Naive thymus-derived CD4-positive, alpha-beta T cell (primary cell): ENCODE measurements at regions of chr5 and their contacts with region 1.

Region 1: DNA sequence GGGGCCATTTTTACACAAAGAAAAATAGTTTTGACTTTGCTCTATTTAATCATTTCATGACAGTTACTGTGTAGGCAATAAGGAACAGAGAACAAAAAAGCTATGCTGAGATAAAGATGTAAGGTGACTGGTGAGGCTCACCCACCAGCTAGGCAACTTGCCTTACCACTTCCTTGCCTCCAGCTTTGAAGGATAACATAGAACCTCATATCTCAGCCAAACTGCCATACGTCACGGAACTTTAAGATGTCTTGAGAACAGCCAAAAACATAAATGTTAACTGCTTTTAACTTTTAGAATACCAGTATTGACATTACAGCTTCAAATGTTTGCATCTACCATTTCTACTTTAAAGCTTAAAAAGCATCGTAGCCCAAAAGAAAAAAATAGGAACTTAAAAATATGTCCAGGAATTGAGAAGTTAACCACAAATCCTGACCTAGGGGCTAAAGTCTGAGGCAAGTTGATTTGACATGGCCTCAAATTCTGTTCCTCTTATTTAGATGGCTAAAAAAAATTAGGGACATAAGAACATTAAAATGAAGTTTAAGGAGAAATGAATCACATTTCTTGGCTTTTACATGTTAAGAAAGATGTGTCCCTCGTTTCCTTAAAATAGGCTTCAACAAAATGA is 7.7 kb upstream of the GCNT4 start:
- DNase-seq: peak in 7 of 9 donors; percentile 79 to 96 (median 92)
- ATAC-seq: peak; percentile 96
- H3K4me3 ChIP-seq: no peak overlapping the region
- H3K4me3 Mint-ChIP-seq: peak overlapping the region in 9 of 10 donors; percentile 68 to 85 (median 75)
- H3K27ac ChIP-seq: peak overlapping the region; percentile 77
- H3K27ac Mint-ChIP-seq: peak overlapping the region; percentile 70 to 99 (median 98)
- H3K4me1 ChIP-seq: peaks cover 32 to 81% of the 10 kb centered on the region in 2 donors
- H3K4me1 Mint-ChIP-seq: peaks cover 25 to 96% (median 83%) of the 10 kb centered on the region in 7 donors
- H3K27me3 ChIP-seq: no peaks in the 10 kb centered on the region
- H3K27me3 Mint-ChIP-seq: peaks cover 0 to 5% (median 0%) of the 10 kb centered on the region in 5 donors

Region 2: GRCh38 chr5:74272024-74272775 is 787.8 kb before region 1 on chr5:
- CTCF ChIA-PET with region 1: no interaction called
- POLR2A ChIA-PET with region 1: no interaction called
- intact Hi-C with region 1: no loop called
- DNase-seq: no peak
- ATAC-seq: no peak
- H3K4me3 ChIP-seq: no peak overlapping the region
- H3K4me3 Mint-ChIP-seq: no peak overlapping the region
- H3K27ac ChIP-seq: no peak overlapping the region
- H3K27ac Mint-ChIP-seq: no peak overlapping the region
- H3K4me1 ChIP-seq: no peaks in the 10 kb centered on the region
- H3K4me1 Mint-ChIP-seq: no peaks in the 10 kb centered on the region
- H3K27me3 ChIP-seq: no peaks in the 10 kb centered on the region
- H3K27me3 Mint-ChIP-seq: peaks cover 0 to 17% (median 14%) of the 10 kb centered on the region in 5 donors

Region 3: GRCh38 chr5:75078027-75078426 is 18.0 kb after region 1 on chr5:
- CTCF ChIA-PET with region 1: interaction called, 3 read pairs
- POLR2A ChIA-PET with region 1: interaction called, 11 read pairs
- intact Hi-C with region 1: loop called in 1 of 2 experiments (anchors 1 kb)
- DNase-seq: peak in 6 of 9 donors; percentile 39 to 78 (median 60)
- ATAC-seq: peak; percentile 87
- H3K4me3 ChIP-seq: no peak overlapping the region
- H3K4me3 Mint-ChIP-seq: peak overlapping the region in 7 of 10 donors; percentile 9 to 52 (median 29)
- H3K27ac ChIP-seq: no peak overlapping the region
- H3K27ac Mint-ChIP-seq: peak overlapping the region in 3 of 9 donors; percentile 67 to 78 (median 76)
- H3K4me1 ChIP-seq: peaks cover 3 to 12% of the 10 kb centered on the region in 2 donors
- H3K4me1 Mint-ChIP-seq: peaks cover 3 to 49% (median 34%) of the 10 kb centered on the region in 7 donors
- H3K27me3 ChIP-seq: no peaks in the 10 kb centered on the region
- H3K27me3 Mint-ChIP-seq: peaks cover 0 to 5% (median 0%) of the 10 kb centered on the region in 5 donors

Region 4: DNA sequence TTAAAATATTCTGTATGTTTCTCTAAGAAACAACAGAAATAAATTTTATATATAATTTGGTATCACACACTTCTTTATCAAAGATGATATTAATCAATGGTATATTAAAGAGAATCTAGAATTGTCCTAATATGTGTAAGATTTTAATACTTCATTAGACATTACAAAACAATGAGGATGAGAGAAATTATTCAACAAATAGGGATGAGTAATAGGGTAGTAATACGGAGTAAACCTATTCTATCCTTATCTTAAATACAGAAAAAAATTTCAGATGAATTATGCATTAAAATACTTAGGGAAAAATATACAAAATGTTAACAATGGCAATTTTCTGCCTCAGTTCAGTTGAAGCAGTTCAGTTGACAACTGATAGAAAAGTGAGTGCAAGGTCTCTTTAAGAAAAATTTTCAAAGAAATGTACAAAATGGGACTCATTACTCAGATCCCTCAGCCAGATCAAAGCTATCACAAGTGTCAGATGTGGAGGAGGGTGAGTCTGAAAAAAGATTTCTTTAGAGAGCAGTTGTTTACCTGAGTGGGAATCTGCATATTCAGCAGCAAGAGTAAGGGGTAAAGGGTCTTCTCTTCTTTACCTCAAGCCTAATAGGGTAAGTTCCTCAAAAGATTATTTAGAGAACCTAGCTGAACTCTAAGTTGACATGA is 49.0 kb after region 1 on chr5:
- CTCF ChIA-PET with region 1: interaction called, 3 read pairs
- POLR2A ChIA-PET with region 1: interaction called, 5 read pairs
- intact Hi-C with region 1: loop called in 1 of 2 experiments (anchors 2 kb)
- DNase-seq: peak in 6 of 9 donors; percentile 16 to 39 (median 26)
- ATAC-seq: peak; percentile 47
- H3K4me3 ChIP-seq: no peak overlapping the region
- H3K4me3 Mint-ChIP-seq: peak overlapping the region in 2 of 10 donors; percentile 1 to 7
- H3K27ac ChIP-seq: no peak overlapping the region
- H3K27ac Mint-ChIP-seq: peak overlapping the region in 8 of 9 donors; percentile 7 to 82 (median 67)
- H3K4me1 ChIP-seq: peaks cover 0 to 19% of the 10 kb centered on the region in 2 donors
- H3K4me1 Mint-ChIP-seq: peaks cover 0 to 49% (median 35%) of the 10 kb centered on the region in 7 donors
- H3K27me3 ChIP-seq: no peaks in the 10 kb centered on the region
- H3K27me3 Mint-ChIP-seq: peaks cover 0 to 3% (median 0%) of the 10 kb centered on the region in 5 donors

Region 5: DNA sequence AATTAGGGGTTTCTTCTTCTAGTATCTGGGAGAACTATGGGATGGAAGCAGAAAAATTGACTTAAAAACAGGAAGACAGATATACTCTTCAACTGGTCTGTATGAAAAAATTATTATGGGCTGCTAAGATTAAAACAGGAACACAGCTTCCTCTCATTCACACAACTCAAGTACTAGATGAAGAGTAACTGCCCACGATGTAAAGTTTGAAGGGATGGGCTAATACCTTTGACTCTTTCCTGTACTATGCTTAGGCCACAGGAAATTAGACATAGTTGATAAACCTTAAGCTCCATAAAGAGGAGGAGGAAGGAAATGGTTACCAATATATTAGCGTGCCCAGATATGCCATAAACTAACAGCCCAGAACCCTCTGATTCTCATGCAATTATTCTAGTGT is 88.0 kb after region 1 on chr5:
- CTCF ChIA-PET with region 1: no interaction called
- POLR2A ChIA-PET with region 1: interaction called, 11 read pairs
- intact Hi-C with region 1: no loop called
- DNase-seq: no peak
- ATAC-seq: no peak
- H3K4me3 ChIP-seq: no peak overlapping the region
- H3K4me3 Mint-ChIP-seq: no peak overlapping the region
- H3K27ac ChIP-seq: no peak overlapping the region
- H3K27ac Mint-ChIP-seq: peak overlapping the region in 2 of 9 donors; percentile 24 to 38
- H3K4me1 ChIP-seq: peaks cover 0 to 7% of the 10 kb centered on the region in 2 donors
- H3K4me1 Mint-ChIP-seq: peaks cover 2 to 33% (median 22%) of the 10 kb centered on the region in 7 donors
- H3K27me3 ChIP-seq: peaks cover 0 to 3% of the 10 kb centered on the region in 2 donors
- H3K27me3 Mint-ChIP-seq: no peaks in the 10 kb centered on the region

Region 6: DNA sequence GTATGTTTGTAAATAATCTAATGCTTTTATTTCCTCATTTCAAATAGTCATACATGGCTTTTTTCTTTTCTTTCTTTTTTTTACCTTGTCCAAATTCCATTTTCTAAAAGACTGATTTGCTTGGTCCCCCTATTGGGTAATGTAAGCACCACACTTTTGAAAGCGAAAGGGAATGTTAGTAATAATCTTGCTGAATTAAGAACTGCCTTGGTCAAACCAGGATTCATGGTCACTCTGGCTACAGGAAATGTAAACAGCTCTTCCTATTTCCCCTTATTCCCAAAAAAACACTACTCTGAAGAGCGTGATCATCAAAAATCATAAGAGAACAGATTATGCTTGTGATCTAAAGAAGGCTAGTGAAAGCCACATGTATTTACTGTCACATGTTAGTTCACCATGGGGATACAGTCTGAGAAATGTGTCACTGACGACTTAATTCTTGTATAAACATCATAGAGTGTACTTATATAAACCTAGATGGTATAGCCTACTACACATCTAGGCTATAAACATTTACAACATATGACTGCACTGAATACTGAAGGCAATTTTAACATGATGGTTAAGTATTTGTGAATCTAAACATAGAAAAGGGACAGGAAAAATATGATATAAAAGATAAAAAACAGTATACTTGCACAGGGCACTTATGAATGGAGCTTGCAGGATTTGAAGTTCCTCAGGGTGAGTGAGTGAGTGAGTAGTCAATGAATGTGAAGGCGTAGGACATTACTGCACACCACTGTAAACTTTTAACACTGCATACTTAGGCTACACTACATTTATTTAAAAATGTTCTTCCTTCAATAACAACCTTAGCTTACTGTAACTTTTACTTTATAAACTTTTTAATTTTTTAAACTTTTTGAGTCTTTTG is 352.3 kb after region 1 on chr5:
- CTCF ChIA-PET with region 1: no interaction called
- POLR2A ChIA-PET with region 1: no interaction called
- intact Hi-C with region 1: no loop called
- DNase-seq: no peak
- ATAC-seq: no peak
- H3K4me3 ChIP-seq: no peak overlapping the region
- H3K4me3 Mint-ChIP-seq: no peak overlapping the region
- H3K27ac ChIP-seq: no peak overlapping the region
- H3K27ac Mint-ChIP-seq: peak overlapping the region in 1 of 9 donors; percentile 38
- H3K4me1 ChIP-seq: no peaks in the 10 kb centered on the region
- H3K4me1 Mint-ChIP-seq: peaks cover 0 to 5% (median 0%) of the 10 kb centered on the region in 7 donors
- H3K27me3 ChIP-seq: no peaks in the 10 kb centered on the region
- H3K27me3 Mint-ChIP-seq: no peaks in the 10 kb centered on the region